Activated T-helper 2 cell treated with anti-CD3 and anti-CD28 coated beads, Interferon-gamma antibody, Interleukin-2, Interleukin-4, amounts not matched to agents 10 μg/mL and 5 μg/mL and 100 μg/mL, durations not matched to agents 14 hours and 24 hours and 36 hours (primary cell): ENCODE measurements at regions of chr2 and their contacts with region 1.

Region 1: DNA sequence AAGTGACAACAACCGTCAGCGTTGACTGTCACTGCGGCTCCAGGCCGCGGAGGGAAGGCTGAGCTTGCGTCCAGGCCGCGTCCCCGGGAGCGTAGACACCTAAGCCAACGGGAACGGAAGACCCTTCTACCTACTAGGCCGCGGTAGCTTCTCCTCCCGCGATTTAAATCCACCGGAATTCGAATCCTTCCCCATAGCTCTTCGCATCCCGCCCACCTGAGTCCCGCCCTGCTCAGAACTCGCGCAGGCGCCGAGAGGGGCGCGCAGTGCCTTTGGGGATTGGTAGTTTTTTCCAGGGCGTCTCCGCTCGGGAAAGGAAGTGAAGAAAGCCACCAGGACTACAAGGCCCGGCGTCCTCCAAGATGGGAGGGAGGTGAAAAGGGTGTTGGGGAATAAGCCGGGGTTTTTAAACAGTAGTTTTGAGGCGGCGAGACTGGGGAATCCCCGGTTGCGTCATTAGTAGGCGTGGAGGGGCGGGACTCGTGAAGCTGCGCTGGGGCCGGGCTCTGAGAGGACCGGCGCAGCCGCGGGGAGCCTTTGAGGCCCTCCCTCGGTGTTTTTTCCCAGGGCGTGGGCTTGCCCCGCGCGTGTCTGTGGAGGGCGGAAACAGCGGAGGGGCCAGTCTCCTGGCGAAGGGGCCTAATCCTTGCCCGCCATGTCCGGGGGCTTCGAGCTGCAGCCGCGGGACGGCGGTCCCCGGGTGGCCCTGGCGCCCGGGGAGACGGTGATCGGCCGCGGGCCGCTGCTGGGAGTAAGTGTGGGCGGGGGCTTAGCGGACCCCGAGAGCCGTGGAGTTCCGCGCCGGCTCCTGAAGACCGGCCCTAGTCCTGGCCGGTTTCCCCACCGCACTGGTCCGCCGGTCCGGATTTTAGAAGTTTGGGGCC is at the starts of genes APLF and FBXO48:
- DNase-seq: peak; percentile 98
- H3K4me3 Mint-ChIP-seq: peak within 1 kb of the TSS; percentile 95
- H3K27ac Mint-ChIP-seq: peak within 1 kb of the TSS; percentile 94
- H3K4me1 Mint-ChIP-seq: peaks cover 50% of the 10 kb centered on the region
- H3K27me3 Mint-ChIP-seq: no peaks in the 10 kb centered on the region
- total RNA-seq, gene APLF: 3.8 TPM in 2 replicates
- total RNA-seq, gene FBXO48: 1.3 TPM in 2 replicates

Region 2: GRCh38 chr2:68185541-68186164 is 281.7 kb before region 1 on chr2:
- intact Hi-C with region 1: no loop called
- DNase-seq: peak; percentile 35
- H3K4me3 Mint-ChIP-seq: no peak overlapping the region
- H3K27ac Mint-ChIP-seq: peak overlapping the region; percentile 67
- H3K4me1 Mint-ChIP-seq: peaks cover 20% of the 10 kb centered on the region
- H3K27me3 Mint-ChIP-seq: no peaks in the 10 kb centered on the region

Region 3: GRCh38 chr2:68251187-68251854 is 216.0 kb before region 1 on chr2:
- intact Hi-C with region 1: loop called (anchors 1 kb)
- DNase-seq: peak; percentile 75
- H3K4me3 Mint-ChIP-seq: peak overlapping the region; percentile 87
- H3K27ac Mint-ChIP-seq: peak overlapping the region; percentile 94
- H3K4me1 Mint-ChIP-seq: peaks cover 29% of the 10 kb centered on the region
- H3K27me3 Mint-ChIP-seq: no peaks in the 10 kb centered on the region

Region 4: GRCh38 chr2:68448671-68449653 is 18.4 kb before region 1 on chr2:
- intact Hi-C with region 1: no loop called
- DNase-seq: peak; percentile 26
- H3K4me3 Mint-ChIP-seq: no peak overlapping the region
- H3K27ac Mint-ChIP-seq: no peak overlapping the region
- H3K4me1 Mint-ChIP-seq: peaks cover 2% of the 10 kb centered on the region
- H3K27me3 Mint-ChIP-seq: peaks cover 2% of the 10 kb centered on the region

Region 5: GRCh38 chr2:68594674-68595492 is 127.6 kb after region 1 on chr2:
- intact Hi-C with region 1: loop called (anchors 1 kb)
- DNase-seq: peak; percentile 31
- H3K4me3 Mint-ChIP-seq: no peak overlapping the region
- H3K27ac Mint-ChIP-seq: no peak overlapping the region
- H3K4me1 Mint-ChIP-seq: peaks cover 9% of the 10 kb centered on the region
- H3K27me3 Mint-ChIP-seq: peaks cover 13% of the 10 kb centered on the region

Region 6: DNA sequence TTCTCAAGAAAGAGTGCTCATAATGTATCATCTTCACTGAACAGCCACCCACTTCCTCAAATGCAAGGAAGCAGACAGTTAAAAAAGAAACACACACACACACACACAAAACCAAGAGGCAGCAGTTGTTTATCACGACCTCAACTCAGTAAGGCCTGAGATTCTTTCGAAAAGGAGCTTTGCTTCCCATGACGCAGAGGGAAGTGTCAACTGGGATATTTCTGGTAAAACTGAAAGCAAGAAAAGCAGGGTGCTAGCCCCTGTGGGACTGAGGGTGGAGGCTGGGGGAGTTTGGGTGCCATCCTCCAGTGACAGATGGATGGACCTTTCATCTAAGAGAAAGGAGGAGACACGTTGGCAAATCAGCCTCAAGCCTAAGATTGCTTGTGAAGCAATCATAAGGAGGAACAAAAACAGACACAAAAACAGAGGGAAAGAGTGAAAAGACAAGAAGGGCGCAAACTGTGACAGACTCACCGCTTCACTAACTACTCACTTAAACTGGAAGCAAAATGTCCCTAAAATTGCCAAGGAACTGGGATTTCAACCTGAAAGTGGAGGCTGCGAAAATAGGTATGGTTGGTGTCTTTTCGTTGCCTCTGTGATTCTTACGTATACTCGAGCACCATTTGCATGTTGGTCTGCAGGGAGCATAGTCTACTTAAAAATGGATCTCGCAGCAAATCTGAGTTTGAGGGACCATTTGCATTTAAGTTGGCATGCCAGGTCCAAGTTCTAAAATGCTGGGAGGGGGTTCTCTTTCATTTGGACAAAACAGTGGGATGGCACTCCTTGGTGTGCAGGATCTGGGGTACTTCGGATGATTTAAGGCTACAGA is 267.6 kb after region 1 on chr2 and contains the start of gene ARHGAP25:
- intact Hi-C with region 1: loop called (anchors 2 kb)
- DNase-seq: peak; percentile 49
- H3K4me3 Mint-ChIP-seq: no peak within 1 kb of the TSS
- H3K27ac Mint-ChIP-seq: no peak within 1 kb of the TSS
- H3K4me1 Mint-ChIP-seq: peaks cover 29% of the 10 kb centered on the region
- H3K27me3 Mint-ChIP-seq: no peaks in the 10 kb centered on the region
- total RNA-seq, gene ARHGAP25: 39.9 and 41.3 TPM in 2 replicates

Region 7: GRCh38 chr2:68925295-68925896 is 458.1 kb after region 1 on chr2:
- intact Hi-C with region 1: loop called (anchors 1 kb)
- DNase-seq: peak; percentile 44
- H3K4me3 Mint-ChIP-seq: no peak overlapping the region
- H3K27ac Mint-ChIP-seq: no peak overlapping the region
- H3K4me1 Mint-ChIP-seq: peaks cover 6% of the 10 kb centered on the region
- H3K27me3 Mint-ChIP-seq: peaks cover 25% of the 10 kb centered on the region

Region 8: GRCh38 chr2:69386789-69387734 is 919.7 kb after region 1 on chr2 and contains the start of gene GFPT1:
- intact Hi-C with region 1: loop called (anchors 5 kb)
- DNase-seq: peak; percentile 92
- H3K4me3 Mint-ChIP-seq: peak within 1 kb of the TSS; percentile 88
- H3K27ac Mint-ChIP-seq: peak within 1 kb of the TSS; percentile 92
- H3K4me1 Mint-ChIP-seq: peaks cover 41% of the 10 kb centered on the region
- H3K27me3 Mint-ChIP-seq: no peaks in the 10 kb centered on the region
- total RNA-seq, gene GFPT1: 55.7 and 56.6 TPM in 2 replicates

Region 9: GRCh38 chr2:69863298-69863697 is 1396.0 kb after region 1 on chr2:
- intact Hi-C with region 1: no loop called
- DNase-seq: no peak
- H3K4me3 Mint-ChIP-seq: no peak overlapping the region
- H3K27ac Mint-ChIP-seq: no peak overlapping the region
- H3K4me1 Mint-ChIP-seq: no peaks in the 10 kb centered on the region
- H3K27me3 Mint-ChIP-seq: no peaks in the 10 kb centered on the region